ENCODE measurements at regions of chr18 and their contacts with region 1.

Region 1: DNA sequence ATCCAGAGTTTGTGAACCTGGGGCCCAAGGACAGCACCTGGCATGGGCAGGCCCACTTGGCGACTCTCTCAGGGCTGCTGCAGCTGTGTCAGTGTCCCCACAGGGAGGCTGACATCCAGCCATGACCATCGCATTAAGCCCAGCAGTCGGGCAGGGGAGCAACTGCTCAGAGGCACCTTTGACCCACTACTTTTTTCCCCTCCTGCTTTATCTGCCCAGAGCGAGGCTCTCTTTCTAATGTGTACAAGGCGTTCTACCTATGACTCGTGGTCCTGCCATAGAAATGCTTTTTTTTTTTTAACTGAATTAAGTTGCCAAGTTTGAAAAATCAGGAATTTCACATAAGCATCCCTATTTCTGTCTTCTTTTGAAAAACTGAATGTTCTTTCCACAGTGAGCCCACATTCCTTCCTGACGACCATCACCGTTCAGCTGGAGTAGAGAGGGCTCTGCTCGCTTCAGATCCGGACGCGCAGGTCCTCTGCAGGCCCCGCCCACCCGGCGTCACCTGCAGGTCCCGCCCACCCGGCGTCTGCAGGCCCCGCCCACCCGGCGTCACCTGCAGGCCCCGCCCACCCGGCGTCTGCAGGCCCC is 403 bp upstream of the CLUL1 start:
- DNase-seq: no peak
- H3K4me3 Mint-ChIP-seq: no peak overlapping the region
- H3K27ac Mint-ChIP-seq: no peak overlapping the region
- H3K4me1 Mint-ChIP-seq: peaks cover 14% of the 10 kb centered on the region
- H3K27me3 Mint-ChIP-seq: peaks cover 20% of the 10 kb centered on the region

Region 2: DNA sequence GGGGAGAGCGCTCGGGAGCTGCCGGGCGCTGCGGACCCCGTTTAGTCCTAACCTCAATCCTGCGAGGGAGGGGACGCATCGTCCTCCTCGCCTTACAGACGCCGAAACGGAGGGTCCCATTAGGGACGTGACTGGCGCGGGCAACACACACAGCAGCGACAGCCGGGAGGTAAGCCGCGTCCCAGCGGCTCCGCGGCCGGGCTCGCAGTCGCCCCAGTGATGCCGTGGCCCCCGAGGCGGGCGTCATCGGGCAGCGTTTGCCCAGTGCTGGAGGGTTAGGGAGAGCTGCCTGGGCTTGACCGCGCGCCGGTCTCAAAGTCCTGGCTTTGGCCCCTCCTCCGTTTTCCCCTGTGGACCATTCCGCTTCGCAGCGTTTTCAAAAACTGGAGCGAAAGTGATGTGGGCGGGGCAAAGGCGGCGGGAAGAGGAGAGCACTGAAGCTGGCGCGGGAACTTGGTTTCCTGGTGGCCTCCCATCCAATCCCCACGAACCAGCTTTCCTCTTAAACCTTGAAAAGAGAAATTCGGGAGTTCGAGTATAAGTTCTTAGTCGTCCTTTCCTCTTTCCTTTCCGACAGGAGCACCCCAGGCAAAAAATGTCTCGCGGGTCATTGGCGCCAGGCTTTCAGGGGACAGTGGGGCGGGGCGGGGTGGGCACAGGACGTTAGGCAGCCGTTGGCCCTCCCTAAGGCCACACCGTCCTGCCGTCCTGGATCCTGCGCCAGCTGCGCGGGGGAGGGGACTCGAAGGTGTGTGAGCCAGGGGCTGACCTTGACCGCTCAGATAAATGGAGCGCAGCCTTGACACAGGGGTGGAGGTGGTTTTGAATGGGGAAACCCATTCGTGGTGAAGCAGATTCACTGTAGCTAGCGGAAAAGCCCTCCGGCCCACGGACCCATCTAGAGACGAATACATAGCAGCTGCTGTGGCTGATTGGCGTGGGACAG is 61.9 kb after region 1 on chr18:
- intact Hi-C with region 1: loop called (anchors 2 kb)
- DNase-seq: peak; percentile 74
- H3K4me3 Mint-ChIP-seq: peak overlapping the region; percentile 96
- H3K27ac Mint-ChIP-seq: peak overlapping the region; percentile 93
- H3K4me1 Mint-ChIP-seq: peaks cover 39% of the 10 kb centered on the region
- H3K27me3 Mint-ChIP-seq: no peaks in the 10 kb centered on the region